AG04449 (cell line): ENCODE measurements at regions of chr6 and their contacts with region 1.

Region 1: DNA sequence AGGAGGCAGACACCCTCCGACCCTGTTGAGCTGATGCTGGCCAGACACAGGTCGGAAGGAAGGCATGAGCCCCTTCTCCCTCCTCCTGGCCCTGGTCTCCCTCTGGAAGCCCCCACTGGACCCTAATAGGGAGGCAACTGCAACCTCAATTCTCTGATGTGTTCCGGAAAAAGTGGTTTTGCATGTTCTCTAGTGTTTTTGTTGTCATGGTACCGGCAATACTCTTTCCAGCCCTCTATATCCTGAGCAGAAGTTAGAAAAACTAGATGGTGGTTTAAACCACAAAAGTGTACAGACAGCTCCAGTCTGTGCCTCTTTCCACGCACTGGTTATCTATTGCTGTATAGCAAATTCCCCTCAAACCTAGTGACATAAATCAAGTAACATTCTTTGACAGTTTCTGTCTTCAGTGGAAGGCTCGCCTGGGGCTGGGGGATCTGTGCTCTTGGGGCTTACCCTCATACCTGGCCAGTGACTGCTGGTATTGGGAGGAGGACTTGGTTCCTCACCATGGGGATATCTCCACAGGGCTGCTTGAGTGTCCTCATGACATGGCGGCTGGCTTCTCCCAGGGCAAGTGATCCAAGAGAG is 37.0 kb downstream of the SYTL3 start:
- DNase-seq: no peak
- H3K4me3 ChIP-seq: no peak overlapping the region
- CTCF ChIP-seq: no peak

Region 2: DNA sequence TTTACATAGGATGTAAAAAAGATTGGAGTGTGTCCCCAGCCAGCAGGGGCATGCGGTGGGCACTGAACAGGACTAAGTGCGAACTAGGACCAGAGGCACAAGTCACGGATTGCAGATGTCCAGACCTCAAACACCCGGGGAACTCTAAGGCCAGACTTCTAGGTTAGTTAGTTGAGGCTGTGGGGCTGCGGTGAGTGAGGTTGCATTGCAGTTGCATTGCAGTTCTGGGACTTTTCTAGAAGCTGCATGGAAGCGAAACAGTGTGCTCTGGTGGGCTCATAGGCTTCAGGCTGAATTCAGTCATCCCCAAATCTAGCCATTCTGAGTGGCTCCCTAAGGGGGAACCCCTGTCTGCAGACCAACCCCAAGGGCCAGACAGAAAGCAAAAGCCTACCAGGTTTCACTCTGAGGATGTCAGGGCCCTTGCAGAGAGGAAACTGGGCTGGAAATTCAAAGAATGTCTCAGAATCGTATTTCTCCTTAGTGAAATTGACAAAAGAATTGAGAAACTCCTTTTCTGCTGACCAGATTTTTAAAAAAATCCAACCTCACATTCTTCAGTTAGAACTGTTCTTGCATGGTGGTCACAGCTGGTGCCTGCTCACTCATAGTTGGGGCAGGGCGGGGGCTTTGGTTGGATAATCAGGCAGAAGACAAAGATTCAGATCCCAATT is 1123.1 kb before region 1 on chr6:
- CTCF ChIA-PET with region 1: no interaction called
- POLR2A ChIA-PET with region 1: no interaction called
- DNase-seq: no peak
- H3K4me3 ChIP-seq: no peak overlapping the region
- CTCF ChIP-seq: no peak

Region 3: GRCh38 chr6:158213925-158214674 is 472.8 kb before region 1 on chr6:
- CTCF ChIA-PET with region 1: interaction called, 47 read pairs
- POLR2A ChIA-PET with region 1: no interaction called
- DNase-seq: no peak
- H3K4me3 ChIP-seq: no peak overlapping the region
- CTCF ChIP-seq: peak; percentile 70

Region 4: GRCh38 chr6:158231551-158232315 is 455.2 kb before region 1 on chr6:
- CTCF ChIA-PET with region 1: interaction called, 18 read pairs
- POLR2A ChIA-PET with region 1: no interaction called
- DNase-seq: no peak
- H3K4me3 ChIP-seq: peak overlapping the region; percentile 73
- CTCF ChIP-seq: no peak

Region 5: GRCh38 chr6:158644231-158645063 is 42.4 kb before region 1 on chr6 and contains the start of gene DYNLT1:
- CTCF ChIA-PET with region 1: interaction called, 29 read pairs
- POLR2A ChIA-PET with region 1: interaction called, 6 read pairs
- DNase-seq: no peak
- H3K4me3 ChIP-seq: peak within 1 kb of the TSS; percentile 99
- CTCF ChIP-seq: no peak

Region 6: GRCh38 chr6:158660333-158660754 is 26.5 kb before region 1 on chr6:
- CTCF ChIA-PET with region 1: interaction called, 22 read pairs
- POLR2A ChIA-PET with region 1: no interaction called
- DNase-seq: no peak
- H3K4me3 ChIP-seq: no peak overlapping the region
- CTCF ChIP-seq: peak; percentile 53

Region 7: GRCh38 chr6:158704181-158704822 is 17.4 kb after region 1 on chr6:
- CTCF ChIA-PET with region 1: interaction called, 57 read pairs
- POLR2A ChIA-PET with region 1: no interaction called
- DNase-seq: no peak
- H3K4me3 ChIP-seq: peak overlapping the region; percentile 63
- CTCF ChIP-seq: peak; percentile 99

Region 8: DNA sequence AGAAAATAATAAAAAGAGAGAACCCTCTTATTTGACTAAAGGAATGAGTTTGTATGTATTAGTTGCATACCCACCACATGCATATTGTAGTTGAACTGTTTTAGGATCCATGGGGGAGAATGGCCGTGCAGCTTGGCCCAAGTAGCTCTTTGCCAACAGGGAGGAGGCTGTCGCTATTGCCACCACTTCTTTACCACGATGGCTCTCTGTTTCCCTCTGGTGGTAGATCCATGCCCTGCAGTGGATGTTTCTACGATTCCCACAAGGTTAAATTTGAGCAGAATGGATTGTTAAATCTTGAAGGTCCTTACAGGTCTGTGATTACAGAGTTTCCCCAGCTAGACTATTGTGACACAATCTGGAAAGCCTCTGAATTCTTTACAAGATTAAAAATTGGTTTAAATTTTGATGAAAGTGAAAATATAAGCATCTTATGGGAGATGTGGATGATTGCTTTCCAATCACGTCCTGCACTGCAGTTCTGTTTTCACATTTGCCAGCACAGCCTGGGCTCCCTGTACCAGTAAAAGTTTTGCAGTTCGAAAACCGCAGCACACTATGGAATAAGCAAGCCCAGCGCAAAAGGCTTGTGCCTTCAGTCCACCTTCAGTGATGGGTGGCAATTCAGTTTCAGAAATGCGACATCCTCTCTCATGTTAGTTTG is 447.9 kb after region 1 on chr6:
- CTCF ChIA-PET with region 1: interaction called, 10 read pairs
- POLR2A ChIA-PET with region 1: no interaction called
- DNase-seq: no peak
- H3K4me3 ChIP-seq: no peak overlapping the region
- CTCF ChIP-seq: peak; percentile 86